ENCODE measurements at regions of chr3 and their contacts with region 1.

Region 1: GRCh38 chr3:99875929-99876841 is 58.5 kb downstream of the CMSS1 start:
- DNase-seq: peak; percentile 70
- H3K4me3 Mint-ChIP-seq: peak overlapping the region; percentile 83
- H3K27ac Mint-ChIP-seq: no peak overlapping the region
- H3K4me1 Mint-ChIP-seq: peaks cover 52% of the 10 kb centered on the region
- H3K27me3 Mint-ChIP-seq: peaks cover 1% of the 10 kb centered on the region

Region 2: GRCh38 chr3:99620077-99620767 is 256.0 kb before region 1 on chr3:
- intact Hi-C with region 1: no loop called
- DNase-seq: no peak
- H3K4me3 Mint-ChIP-seq: no peak overlapping the region
- H3K27ac Mint-ChIP-seq: no peak overlapping the region
- H3K4me1 Mint-ChIP-seq: peaks cover 4% of the 10 kb centered on the region
- H3K27me3 Mint-ChIP-seq: peaks cover 2% of the 10 kb centered on the region

Region 3: DNA sequence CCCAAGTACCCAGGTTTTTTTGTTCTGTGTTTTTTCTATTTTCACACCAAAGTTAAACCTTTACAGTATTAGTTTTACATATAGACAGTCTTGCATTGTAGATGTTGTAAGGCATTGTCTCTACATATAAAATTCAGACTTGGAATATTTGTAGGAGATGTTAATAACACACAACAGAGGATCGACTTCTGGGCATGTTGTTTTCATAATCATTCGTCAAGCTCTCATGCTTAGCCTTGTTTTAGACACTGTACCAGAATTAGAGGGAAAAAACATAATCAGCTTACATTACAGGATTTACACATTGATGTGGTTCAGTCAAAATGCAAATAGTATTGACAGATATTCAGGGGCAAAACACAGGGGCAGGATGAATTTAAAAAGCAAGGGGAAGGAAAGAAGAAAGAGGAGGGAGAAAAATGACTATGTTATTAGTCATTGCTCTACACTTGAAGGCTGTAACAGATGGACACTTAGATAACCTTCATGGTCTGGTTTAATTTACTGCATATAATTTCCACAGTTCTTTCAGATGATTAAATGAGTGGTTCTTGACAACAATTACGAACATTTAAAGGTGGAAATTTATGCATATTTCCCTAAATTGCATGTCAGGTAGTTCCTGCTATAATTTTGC is 51.1 kb before region 1 on chr3:
- intact Hi-C with region 1: loop called (anchors 2 kb)
- DNase-seq: no peak
- H3K4me3 Mint-ChIP-seq: peak overlapping the region; percentile 24
- H3K27ac Mint-ChIP-seq: peak overlapping the region; percentile 52
- H3K4me1 Mint-ChIP-seq: peaks cover 39% of the 10 kb centered on the region
- H3K27me3 Mint-ChIP-seq: no peaks in the 10 kb centered on the region

Region 4: DNA sequence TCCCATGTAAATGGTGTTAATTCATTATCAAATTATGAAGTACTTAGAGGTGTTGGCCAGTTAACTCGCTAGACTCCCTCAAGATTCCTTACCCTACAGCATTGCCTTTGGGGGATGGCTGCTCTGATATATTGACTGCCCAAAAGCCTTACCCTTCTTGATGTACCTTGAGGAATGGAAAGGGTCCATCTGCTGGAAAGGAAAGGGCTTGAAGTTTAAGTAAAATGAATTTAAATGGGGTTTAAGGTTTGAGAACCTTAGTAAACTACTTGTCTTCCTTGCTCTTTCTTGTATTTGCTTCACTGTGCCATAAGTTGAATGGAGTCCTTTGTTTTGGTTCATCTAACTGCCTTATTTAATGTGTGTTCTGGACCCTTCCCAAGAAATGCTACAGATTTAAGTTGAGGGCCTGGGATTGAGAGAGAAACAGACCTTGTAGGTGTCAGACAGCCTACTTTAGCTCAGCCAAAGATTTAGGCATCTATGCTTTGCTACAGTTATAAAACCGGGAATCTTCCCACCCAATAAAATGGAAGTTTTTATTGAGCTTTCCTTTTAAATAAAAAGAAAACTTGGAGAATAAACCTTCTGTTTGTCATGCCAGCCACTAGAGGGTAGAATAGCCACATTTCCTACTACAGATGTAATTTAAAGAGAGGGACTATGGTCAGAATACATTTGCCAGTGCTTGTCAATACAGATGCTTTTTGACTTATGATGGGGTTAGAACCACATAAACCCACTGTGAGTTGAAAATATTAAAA is 33.2 kb before region 1 on chr3:
- intact Hi-C with region 1: loop called (anchors 5 kb)
- DNase-seq: no peak
- H3K4me3 Mint-ChIP-seq: no peak overlapping the region
- H3K27ac Mint-ChIP-seq: no peak overlapping the region
- H3K4me1 Mint-ChIP-seq: peaks cover 26% of the 10 kb centered on the region
- H3K27me3 Mint-ChIP-seq: no peaks in the 10 kb centered on the region

Region 5: DNA sequence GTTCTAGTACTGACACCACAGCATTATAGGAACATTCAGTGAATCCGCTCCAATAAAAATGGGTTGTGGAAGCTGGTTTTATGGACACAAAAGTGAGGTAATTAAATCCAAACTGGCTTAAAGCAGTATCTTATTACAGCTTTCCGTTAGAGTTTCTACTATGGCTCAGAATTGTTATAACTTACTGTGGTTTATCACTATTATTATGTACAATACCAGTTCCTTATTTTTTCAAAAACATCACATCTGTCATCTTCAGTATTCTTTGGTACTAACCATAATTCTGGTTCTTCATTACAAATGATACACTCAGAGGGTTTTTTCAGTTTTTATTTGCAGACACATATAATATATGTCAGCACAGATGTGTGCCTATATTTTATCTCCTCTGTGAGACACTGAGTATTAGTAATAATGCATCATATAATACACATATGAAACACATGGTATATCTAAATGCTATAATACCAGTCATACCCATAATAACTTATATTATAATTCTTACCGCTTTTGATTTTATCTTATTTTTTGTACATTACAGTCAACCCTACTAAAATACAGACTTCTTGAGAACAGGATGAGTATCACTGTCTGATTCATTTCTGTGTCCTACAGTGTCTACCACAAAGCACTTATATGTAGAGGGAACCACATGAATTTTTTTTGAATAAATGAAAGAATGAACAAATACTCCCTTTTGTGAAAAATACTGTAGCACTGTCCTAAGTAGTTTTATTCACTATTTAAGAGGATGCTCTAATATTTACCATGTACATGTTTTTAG is 19.6 kb before region 1 on chr3:
- intact Hi-C with region 1: loop called (anchors 1 kb)
- DNase-seq: no peak
- H3K4me3 Mint-ChIP-seq: no peak overlapping the region
- H3K27ac Mint-ChIP-seq: peak overlapping the region; percentile 89
- H3K4me1 Mint-ChIP-seq: peaks cover 70% of the 10 kb centered on the region
- H3K27me3 Mint-ChIP-seq: no peaks in the 10 kb centered on the region

Region 6: DNA sequence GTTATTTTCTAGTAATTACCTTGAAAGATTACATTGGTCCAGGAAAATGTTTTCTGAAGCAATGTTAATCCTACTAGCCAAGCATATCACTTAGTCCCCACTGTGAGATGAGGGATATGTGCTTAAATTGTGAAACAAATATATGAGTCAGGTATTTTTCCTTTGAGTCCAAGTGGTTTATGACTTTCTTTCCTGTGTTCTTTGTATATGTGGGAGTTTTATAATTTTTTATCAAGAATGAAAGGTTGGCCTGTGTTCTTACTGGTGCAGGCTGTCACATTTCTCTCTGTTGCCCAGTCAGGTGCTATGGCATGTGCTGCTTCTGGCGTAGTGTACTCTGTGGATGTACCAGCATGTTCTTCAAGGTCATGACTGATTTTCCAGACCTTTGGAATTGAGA is 88.9 kb after region 1 on chr3:
- intact Hi-C with region 1: loop called (anchors 5 kb)
- DNase-seq: no peak
- H3K4me3 Mint-ChIP-seq: no peak overlapping the region
- H3K27ac Mint-ChIP-seq: no peak overlapping the region
- H3K4me1 Mint-ChIP-seq: peaks cover 39% of the 10 kb centered on the region
- H3K27me3 Mint-ChIP-seq: no peaks in the 10 kb centered on the region

Region 7: DNA sequence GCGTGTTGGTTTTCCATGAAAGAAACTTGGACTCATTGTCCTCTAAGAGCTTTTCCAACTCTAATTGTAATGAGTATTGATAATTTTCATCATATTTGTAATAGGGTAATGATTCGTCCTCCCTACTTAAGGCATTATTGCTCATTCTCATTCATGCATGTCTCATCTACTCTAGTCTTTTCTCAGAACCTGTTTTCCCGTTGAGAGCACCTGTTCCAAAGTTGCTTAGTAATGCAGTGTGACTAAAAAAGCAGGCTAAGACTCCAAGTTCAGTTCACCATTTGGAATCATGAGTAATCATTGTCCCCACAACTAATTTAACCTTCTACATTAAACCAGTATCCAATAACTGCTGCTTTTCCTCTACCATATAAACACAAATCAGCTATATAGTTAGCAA is 154.2 kb after region 1 on chr3:
- intact Hi-C with region 1: loop called (anchors 2 kb)
- DNase-seq: no peak
- H3K4me3 Mint-ChIP-seq: no peak overlapping the region
- H3K27ac Mint-ChIP-seq: no peak overlapping the region
- H3K4me1 Mint-ChIP-seq: peaks cover 18% of the 10 kb centered on the region
- H3K27me3 Mint-ChIP-seq: no peaks in the 10 kb centered on the region

Measured in activated T-helper 2 cell treated with anti-CD3 and anti-CD28 coated beads, Interferon-gamma antibody, Interleukin-2, Interleukin-4, amounts not matched to agents 10 μg/mL and 5 μg/mL and 100 μg/mL, durations not matched to agents 14 hours and 24 hours and 36 hours (primary cell).